Activated CD4-positive, alpha-beta T cell treated with anti-CD3 and anti-CD28 coated beads, Interleukin-2, amount 10 ng/mL, durations not matched to agents 24 days and 14 days (primary cell): ENCODE measurements at regions of chr20 and their contacts with region 1.

Region 1: GRCh38 chr20:50790651-50791277 is 4.1 kb upstream of the BCAS4 start:
- DNase-seq: peak; percentile 93
- H3K4me3 Mint-ChIP-seq: no peak overlapping the region
- H3K27ac Mint-ChIP-seq: peak overlapping the region; percentile 69
- H3K4me1 Mint-ChIP-seq: peaks cover 11% of the 10 kb centered on the region
- H3K27me3 Mint-ChIP-seq: peaks cover 4% of the 10 kb centered on the region

Region 2: DNA sequence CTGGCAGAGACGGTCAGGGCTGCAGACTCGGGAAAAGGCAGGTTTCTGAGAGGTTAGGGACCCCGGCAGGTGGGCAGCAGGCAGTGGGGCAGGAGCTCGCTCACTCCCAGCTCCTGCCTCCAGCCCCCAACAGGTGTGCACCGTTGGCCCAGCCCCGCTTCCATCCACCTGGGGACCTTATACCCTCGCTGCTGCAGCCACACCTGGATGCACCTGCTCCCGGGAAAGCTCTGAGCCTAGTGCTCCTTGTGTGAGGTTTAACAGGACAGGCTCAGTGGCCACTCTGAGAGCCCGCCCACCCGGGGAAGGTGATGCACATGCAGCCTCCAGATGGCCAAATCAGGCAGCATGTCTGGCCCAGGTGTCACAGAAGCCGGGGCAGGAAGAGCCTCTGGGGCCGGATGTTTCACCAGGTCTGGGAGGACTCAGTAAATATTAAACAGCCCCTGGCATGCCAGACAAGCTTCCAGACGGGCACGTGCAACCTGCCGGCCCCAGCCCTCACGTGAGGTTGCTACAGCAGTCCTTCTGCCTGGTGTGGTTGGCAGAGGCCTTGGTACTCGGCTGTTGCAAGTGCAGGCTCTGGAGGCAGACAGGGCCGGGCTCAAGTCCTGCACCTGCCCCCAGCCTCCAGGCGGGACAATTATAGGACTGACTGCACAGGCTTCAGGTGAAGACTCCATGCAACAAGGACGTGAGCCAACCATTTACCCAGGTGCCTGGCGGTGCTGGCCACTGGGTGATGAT is 166.3 kb before region 1 on chr20:
- intact Hi-C with region 1: no loop called
- DNase-seq: no peak
- H3K4me3 Mint-ChIP-seq: no peak overlapping the region
- H3K27ac Mint-ChIP-seq: no peak overlapping the region
- H3K4me1 Mint-ChIP-seq: no peaks in the 10 kb centered on the region
- H3K27me3 Mint-ChIP-seq: no peaks in the 10 kb centered on the region

Region 3: GRCh38 chr20:50958615-50959542 is 168.1 kb after region 1 on chr20 and contains the start of gene MOCS3:
- intact Hi-C with region 1: loop called (anchors 2 kb)
- DNase-seq: peak; percentile 95
- H3K4me3 Mint-ChIP-seq: peak within 1 kb of the TSS; percentile 99
- H3K27ac Mint-ChIP-seq: peak within 1 kb of the TSS; percentile 96
- H3K4me1 Mint-ChIP-seq: peaks cover 28% of the 10 kb centered on the region
- H3K27me3 Mint-ChIP-seq: no peaks in the 10 kb centered on the region
- total RNA-seq, gene MOCS3: 5.7 and 6.3 TPM in 2 replicates

Region 4: GRCh38 chr20:50980851-50981713 is 190.3 kb after region 1 on chr20:
- intact Hi-C with region 1: loop called (anchors 5 kb)
- DNase-seq: peak; percentile 87
- H3K4me3 Mint-ChIP-seq: peak overlapping the region; percentile 40
- H3K27ac Mint-ChIP-seq: peak overlapping the region; percentile 88
- H3K4me1 Mint-ChIP-seq: peaks cover 14% of the 10 kb centered on the region
- H3K27me3 Mint-ChIP-seq: peaks cover 15% of the 10 kb centered on the region